CD4-positive, alpha-beta T cell (primary cell): ENCODE measurements at regions of chr10 and their contacts with region 1.

Region 1: DNA sequence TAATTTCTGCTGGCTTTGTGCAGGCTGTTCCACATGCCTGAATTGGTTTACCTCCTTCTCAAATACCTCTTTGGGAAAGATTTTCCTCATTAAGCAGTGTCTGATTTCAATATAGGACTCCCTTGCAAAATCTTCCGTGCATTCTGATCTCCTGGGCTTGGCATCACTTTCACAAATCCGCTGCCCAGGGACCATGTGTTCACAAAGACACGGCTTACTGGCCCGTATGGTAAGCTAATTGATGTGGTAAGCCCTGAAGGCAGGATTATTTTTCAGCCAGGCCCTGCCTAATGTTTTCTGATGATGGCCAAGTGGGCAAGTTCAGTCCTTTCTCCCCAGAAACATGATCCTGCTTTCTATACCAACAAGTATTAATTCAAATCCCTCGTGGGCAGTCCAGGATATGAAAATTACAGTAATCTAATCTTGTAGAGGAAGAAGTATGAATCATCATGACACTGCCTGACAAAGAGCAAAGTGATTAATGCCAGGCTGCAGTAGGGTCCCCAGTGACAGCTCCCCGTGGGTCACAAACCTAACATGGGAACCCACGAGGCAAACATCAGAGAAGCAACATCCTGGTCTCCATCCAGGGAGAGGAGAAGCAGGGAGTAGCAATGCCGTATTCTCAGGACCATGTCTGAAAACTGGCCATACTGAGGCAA is 11.6 kb upstream of the SVIL start:
- DNase-seq: peak in 4 of 14 experiments; percentile 8 to 55 (median 32)
- ATAC-seq: peak; percentile 18
- H3K4me3 ChIP-seq: no peak overlapping the region
- H3K4me3 Mint-ChIP-seq: peak overlapping the region; percentile 57
- H3K27ac ChIP-seq: no peak overlapping the region
- H3K27ac Mint-ChIP-seq: peak overlapping the region; percentile 78
- H3K4me1 ChIP-seq: peaks cover 27% of the 10 kb centered on the region
- H3K4me1 Mint-ChIP-seq: peaks cover 66% of the 10 kb centered on the region
- H3K27me3 ChIP-seq: no peaks in the 10 kb centered on the region
- H3K27me3 Mint-ChIP-seq: no peaks in the 10 kb centered on the region
- CTCF ChIP-seq: no peak

Region 2: GRCh38 chr10:29576681-29577080 is 69.7 kb before region 1 on chr10:
- CTCF ChIA-PET with region 1: no interaction called
- POLR2A ChIA-PET with region 1: no interaction called
- intact Hi-C with region 1: no loop called
- DNase-seq: no peak
- ATAC-seq: no peak
- H3K4me3 ChIP-seq: no peak overlapping the region
- H3K4me3 Mint-ChIP-seq: no peak overlapping the region
- H3K27ac ChIP-seq: no peak overlapping the region
- H3K27ac Mint-ChIP-seq: no peak overlapping the region
- H3K4me1 ChIP-seq: no peaks in the 10 kb centered on the region
- H3K4me1 Mint-ChIP-seq: no peaks in the 10 kb centered on the region
- H3K27me3 ChIP-seq: no peaks in the 10 kb centered on the region
- H3K27me3 Mint-ChIP-seq: no peaks in the 10 kb centered on the region
- CTCF ChIP-seq: no peak

Region 3: DNA sequence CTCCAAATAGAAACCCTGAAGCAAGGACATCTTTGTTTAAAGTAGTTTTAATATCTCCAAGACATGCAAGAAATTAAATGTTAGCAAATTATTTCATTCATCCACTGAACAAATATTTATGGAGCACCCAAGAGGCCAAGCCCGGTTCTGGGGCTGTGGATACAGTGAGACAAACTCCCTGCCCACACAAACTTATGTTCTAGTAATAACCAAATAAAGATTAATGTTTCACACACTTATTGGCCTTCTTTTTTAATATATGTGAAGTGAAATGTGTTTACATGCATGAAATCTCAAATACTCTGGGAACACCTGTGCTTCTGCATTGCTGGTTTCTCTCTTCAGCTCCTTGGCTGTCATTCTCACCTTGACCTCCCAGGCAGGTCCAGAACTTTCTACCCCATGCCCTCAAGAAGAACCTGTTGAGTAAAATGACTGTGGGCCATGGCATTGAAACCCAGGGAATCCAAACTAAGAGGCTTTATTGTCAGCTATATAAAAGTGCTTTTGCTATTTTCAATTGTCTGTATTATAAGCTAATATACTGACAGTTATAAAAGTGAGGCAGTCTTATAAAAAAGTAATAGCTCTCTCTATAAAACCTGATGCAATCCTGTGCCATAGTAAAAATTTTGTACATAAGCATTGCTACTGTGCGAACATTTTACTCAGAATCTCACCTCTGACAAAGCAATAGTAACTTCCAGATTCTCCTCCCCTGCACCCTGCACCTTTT is 55.3 kb before region 1 on chr10:
- CTCF ChIA-PET with region 1: interaction called, 10 read pairs
- POLR2A ChIA-PET with region 1: no interaction called
- intact Hi-C with region 1: no loop called
- DNase-seq: no peak
- ATAC-seq: no peak
- H3K4me3 ChIP-seq: no peak overlapping the region
- H3K4me3 Mint-ChIP-seq: no peak overlapping the region
- H3K27ac ChIP-seq: no peak overlapping the region
- H3K27ac Mint-ChIP-seq: no peak overlapping the region
- H3K4me1 ChIP-seq: peaks cover 7% of the 10 kb centered on the region
- H3K4me1 Mint-ChIP-seq: peaks cover 25% of the 10 kb centered on the region
- H3K27me3 ChIP-seq: no peaks in the 10 kb centered on the region
- H3K27me3 Mint-ChIP-seq: no peaks in the 10 kb centered on the region
- CTCF ChIP-seq: peak; percentile 46

Region 4: DNA sequence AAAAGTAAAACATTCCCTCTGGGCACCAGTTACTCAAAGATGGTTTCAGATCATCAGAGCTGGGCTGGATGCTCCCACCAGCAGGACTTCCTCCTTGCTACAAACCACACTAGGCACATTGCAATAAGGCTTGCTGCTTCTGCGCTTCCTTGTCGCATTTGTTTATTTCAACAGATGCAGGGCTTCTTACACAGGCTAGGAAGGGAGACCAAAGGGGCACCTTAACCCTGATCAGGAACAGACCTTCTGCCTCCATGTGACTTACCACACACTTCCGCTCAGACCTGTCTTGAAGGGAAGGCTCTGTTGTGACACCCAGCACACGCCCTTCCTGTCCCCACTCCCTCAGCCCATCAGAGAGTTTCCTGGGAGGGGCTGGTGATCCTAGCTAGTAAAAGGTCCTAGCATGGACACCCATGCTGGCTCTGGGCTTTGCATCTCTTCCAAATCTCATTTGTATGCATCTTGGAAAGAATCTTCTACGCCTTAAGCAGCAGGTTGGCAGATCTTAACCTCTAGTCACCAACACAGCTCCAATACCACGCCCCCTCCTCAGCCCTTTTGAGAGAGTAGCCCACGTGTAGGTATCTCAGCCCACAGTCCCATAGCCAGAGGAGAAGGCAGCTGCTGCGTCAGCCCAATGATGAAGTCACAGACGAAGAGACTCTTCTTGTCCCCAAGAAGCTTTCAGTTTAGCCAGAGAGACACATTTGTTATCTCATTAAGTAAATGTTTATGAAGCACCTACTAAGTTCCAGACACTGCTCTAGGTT is 35.5 kb after region 1 on chr10:
- CTCF ChIA-PET with region 1: no interaction called
- POLR2A ChIA-PET with region 1: interaction called, 11 read pairs
- intact Hi-C with region 1: loop called in 1 of 2 experiments (anchors 5 kb)
- DNase-seq: peak; percentile 36 to 94 (median 60)
- ATAC-seq: peak; percentile 93
- H3K4me3 ChIP-seq: peak overlapping the region; percentile 26
- H3K4me3 Mint-ChIP-seq: peak overlapping the region; percentile 83
- H3K27ac ChIP-seq: peak overlapping the region; percentile 58 to 86
- H3K27ac Mint-ChIP-seq: peak overlapping the region; percentile 93
- H3K4me1 ChIP-seq: peaks cover 70% of the 10 kb centered on the region
- H3K4me1 Mint-ChIP-seq: peaks cover 97% of the 10 kb centered on the region
- H3K27me3 ChIP-seq: no peaks in the 10 kb centered on the region
- H3K27me3 Mint-ChIP-seq: no peaks in the 10 kb centered on the region
- CTCF ChIP-seq: no peak

Region 5: GRCh38 chr10:29941476-29941875 is 295.1 kb after region 1 on chr10:
- CTCF ChIA-PET with region 1: no interaction called
- POLR2A ChIA-PET with region 1: no interaction called
- intact Hi-C with region 1: no loop called
- DNase-seq: no peak
- ATAC-seq: no peak
- H3K4me3 ChIP-seq: no peak overlapping the region
- H3K4me3 Mint-ChIP-seq: no peak overlapping the region
- H3K27ac ChIP-seq: no peak overlapping the region
- H3K27ac Mint-ChIP-seq: no peak overlapping the region
- H3K4me1 ChIP-seq: no peaks in the 10 kb centered on the region
- H3K4me1 Mint-ChIP-seq: no peaks in the 10 kb centered on the region
- H3K27me3 ChIP-seq: peaks cover 0 to 2% of the 10 kb centered on the region in 2 experiments
- H3K27me3 Mint-ChIP-seq: peaks cover 18% of the 10 kb centered on the region
- CTCF ChIP-seq: no peak